Activated T-helper 1 cell treated with anti-CD3 and anti-CD28 coated beads, Interleukin-12 subunit alpha, Interleukin-12 subunit beta, Interleukin-2, Interleukin-4 antibody, amounts not matched to agents 30 ng/mL and 10 ng/mL and 1 ng/mL, durations not matched to agents 14 hours and 24 hours and 36 hours (primary cell): ENCODE measurements at regions of chrX and their contacts with region 1.

Region 1: DNA sequence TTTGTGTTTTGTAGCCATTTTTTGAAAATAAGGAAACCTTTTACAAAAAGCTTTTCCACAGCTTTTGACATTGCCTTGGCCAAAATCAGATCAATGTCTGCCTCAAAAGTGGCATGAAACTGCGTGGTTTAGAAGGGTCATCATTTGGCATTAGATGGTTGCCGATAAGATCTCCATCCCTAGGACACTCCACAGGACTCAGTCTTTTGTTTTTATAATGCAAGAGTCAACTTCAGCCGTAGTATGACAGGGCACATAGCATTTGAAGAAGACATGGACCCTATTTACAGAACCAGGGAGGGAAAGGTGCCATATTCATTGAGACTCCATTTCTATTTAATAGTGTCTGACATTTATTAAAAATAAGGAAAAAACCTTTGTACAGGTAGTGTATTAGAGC is 1.3 kb downstream of the RTL8A start:
- DNase-seq: no peak
- H3K4me3 Mint-ChIP-seq: peak overlapping the region; percentile 93
- H3K27ac Mint-ChIP-seq: peak overlapping the region; percentile 87
- H3K4me1 Mint-ChIP-seq: peaks cover 25% of the 10 kb centered on the region
- H3K27me3 Mint-ChIP-seq: no peaks in the 10 kb centered on the region

Region 2: DNA sequence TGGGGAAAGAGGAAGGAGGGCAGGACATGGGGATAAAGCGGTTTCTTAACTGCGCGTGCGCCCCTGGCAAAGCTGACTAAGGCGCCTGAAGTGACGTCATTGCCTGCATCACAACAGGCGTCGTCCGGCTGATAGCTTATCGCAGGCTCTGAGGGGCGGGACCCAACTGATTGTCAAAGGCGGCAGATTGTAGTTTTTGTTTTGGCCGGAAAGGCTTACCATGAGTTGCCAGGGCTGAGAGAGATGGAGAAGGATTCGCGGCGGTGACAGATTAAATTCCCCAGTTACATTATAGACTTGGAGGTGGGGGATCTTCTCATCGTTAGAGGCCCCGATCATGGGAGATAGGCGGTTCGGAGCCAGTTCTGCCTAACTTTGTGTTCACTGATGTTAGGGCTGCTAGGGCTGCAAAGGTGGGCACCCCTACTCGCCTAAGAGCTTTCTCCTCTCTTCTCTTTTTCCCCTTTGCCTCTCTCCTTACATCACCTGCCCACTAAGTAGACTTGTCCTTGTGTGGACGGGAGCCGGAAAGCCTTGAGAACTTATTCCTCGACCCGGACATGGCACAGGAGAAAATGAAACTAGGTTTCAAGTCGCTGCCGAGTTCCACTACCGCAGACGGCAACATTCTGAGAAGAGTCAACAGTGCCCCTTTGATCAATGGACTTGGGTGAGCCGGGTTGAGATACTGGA is 243.4 kb before region 1 on chrX:
- intact Hi-C with region 1: loop called (anchors 5 kb)
- DNase-seq: peak; percentile 83
- H3K4me3 Mint-ChIP-seq: peak overlapping the region; percentile 96
- H3K27ac Mint-ChIP-seq: peak overlapping the region; percentile 100
- H3K4me1 Mint-ChIP-seq: peaks cover 25% of the 10 kb centered on the region
- H3K27me3 Mint-ChIP-seq: no peaks in the 10 kb centered on the region

Region 3: DNA sequence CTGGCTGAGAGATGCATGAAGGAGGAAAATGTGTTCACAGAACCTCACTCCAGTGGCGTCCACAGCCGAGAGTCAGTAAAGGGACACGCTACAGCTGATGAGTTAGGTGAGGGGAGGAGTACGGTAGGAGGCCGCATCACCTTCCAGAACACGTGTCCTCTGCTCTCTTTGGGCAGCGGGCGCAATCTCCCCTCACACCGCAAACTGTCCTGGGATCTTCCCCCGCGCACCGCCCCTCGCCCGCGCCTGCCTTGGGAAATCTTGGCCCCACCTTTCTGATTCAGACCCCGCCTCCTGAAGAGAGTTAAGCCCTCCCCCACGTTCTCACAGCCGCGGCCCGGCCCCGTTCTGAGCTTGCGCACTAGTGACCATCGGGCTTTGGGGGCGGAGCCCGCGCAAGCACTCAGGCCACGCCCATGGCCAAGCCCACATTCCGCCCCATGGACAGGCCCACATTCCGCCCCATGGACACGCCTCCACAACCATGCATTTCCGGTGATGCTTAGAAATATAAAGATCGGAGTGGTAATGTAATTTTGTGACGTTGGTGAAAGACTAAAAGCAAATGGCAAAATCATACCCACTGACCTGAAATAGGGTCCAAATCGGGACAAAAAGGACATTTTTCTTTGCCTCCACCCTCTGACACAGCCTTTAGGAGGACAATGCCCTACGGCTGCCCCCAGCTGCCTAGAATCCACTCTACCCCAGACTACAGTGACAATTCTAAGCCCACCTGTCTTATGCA is 46.6 kb before region 1 on chrX:
- intact Hi-C with region 1: loop called (anchors 1 kb)
- DNase-seq: peak; percentile 87
- H3K4me3 Mint-ChIP-seq: peak overlapping the region; percentile 87
- H3K27ac Mint-ChIP-seq: peak overlapping the region; percentile 62
- H3K4me1 Mint-ChIP-seq: peaks cover 14% of the 10 kb centered on the region
- H3K27me3 Mint-ChIP-seq: peaks cover under 1% of the 10 kb centered on the region